Naive thymus-derived CD8-positive, alpha-beta T cell (primary cell): ENCODE measurements at regions of chr3 and their contacts with region 1.

Region 1: DNA sequence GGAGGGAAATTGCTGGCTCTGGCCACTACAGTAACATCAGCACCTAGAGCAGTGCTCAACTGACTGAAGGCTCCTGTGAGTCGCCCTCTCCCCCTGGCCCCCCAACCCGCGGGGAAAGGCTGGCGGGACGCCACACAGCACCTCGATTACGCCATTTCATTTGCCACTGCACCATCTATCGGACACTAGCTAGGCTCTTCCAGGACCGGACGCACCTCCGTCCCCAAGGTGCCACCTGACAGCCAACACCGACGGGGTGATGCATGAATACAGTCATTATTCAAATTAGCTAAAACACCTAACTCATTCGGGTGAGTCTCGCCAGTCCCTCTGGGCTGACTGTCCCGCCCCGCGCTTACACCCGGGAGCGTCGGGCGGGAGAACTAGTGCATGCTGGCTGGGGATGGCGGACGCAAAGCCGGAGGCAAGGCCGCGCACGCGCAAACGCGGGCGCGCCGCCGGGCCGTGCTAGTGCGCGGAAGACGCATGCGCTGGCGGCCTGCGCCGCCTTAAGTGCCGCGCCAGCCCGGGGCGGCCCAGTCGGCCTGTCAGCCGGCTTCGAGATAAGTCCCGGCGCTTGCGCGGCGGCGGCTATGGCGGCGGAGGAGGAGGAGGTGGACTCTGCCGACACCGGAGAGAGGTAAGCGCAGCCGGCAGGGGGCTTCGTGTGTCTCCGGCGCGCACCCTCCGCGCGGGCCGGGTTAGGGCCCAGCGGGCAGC is at the start of gene ABHD5:
- DNase-seq: peak; percentile 94 to 98 (median 96)
- ATAC-seq: peak; percentile 94 to 95
- H3K4me3 Mint-ChIP-seq: peak within 1 kb of the TSS; percentile 89 to 98 (median 95)
- H3K27ac Mint-ChIP-seq: peak within 1 kb of the TSS; percentile 88 to 96 (median 94)
- H3K4me1 Mint-ChIP-seq: peaks cover 18 to 38% (median 25%) of the 10 kb centered on the region in 4 donors
- H3K27me3 Mint-ChIP-seq: no peaks in the 10 kb centered on the region
- polyA plus RNA-seq, gene ABHD5: 1.7 to 4.0 (median 3.6) TPM

Region 2: DNA sequence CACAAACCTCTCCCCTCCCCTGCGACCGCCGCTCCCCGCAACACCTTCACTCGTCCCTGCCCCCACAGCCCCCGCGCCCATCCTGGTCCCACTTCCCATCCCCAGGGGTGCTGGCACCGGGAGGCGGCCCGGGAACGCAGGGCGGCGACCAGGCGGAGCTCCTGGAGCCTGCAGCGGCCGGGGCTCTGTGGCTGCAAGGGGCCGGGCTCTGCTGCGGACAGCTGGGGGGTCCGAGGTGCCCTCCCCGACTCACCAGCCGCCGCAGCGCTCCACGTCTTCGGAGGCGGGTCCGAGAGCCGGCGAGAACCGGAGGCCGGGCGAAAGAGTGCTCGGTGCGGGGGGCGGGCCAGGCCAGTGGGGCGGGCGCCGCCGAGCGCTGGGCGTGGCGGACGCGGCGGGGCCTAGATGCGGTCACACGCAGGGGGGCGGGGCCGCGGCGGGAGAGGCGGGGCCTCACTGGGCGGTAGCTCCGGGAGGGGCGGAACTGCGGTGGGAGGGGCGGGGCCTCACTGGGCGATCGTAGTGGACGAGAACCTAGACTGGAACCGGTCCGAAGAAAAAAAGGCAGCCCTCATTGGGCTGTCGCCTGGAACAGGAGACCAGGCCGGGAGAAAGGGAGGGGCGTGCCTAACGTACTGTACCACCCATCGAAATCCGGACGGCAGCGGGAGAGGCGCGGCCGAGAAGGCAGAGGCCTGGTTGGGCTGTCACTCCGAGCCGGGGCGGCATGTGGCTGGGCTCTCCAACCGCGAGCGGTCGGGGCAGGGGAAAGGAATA is 68.7 kb before region 1 on chr3 and contains the start of gene ANO10:
- POLR2A ChIA-PET with region 1: interaction called, 14 read pairs
- DNase-seq: peak; percentile 84 to 97 (median 93)
- ATAC-seq: peak; percentile 87 to 93
- H3K4me3 Mint-ChIP-seq: peak within 1 kb of the TSS; percentile 86 to 94 (median 90)
- H3K27ac Mint-ChIP-seq: peak within 1 kb of the TSS; percentile 53 to 94 (median 87)
- H3K4me1 Mint-ChIP-seq: peaks cover 10 to 22% (median 17%) of the 10 kb centered on the region in 4 donors
- H3K27me3 Mint-ChIP-seq: no peaks in the 10 kb centered on the region
- polyA plus RNA-seq, gene ANO10: 6.9 to 10.4 (median 7.8) TPM

Region 3: DNA sequence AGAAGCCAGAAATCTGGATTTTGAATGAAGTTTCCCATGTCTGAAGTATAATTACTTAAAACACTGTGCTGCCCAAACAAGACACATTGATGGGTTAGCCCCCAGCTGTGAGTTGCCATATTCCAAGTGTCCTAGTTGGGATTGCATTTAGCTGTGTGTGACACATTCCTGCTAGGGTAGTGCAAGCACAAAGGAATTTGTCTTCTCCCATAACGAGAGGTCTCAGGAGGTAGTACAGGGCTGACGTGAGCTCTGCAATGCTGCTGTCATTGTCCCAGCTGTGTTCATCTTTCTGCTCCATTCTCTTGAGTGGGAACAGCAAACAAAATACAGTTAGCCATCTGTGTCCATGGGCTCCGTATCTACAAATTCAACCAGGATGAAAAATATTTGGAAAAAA is 63.8 kb after region 1 on chr3:
- POLR2A ChIA-PET with region 1: interaction called, 16 read pairs
- DNase-seq: no peak
- ATAC-seq: no peak
- H3K4me3 Mint-ChIP-seq: peak overlapping the region in 1 of 10 donors; percentile 13
- H3K27ac Mint-ChIP-seq: peak overlapping the region in 6 of 10 donors; percentile 21 to 98 (median 92)
- H3K4me1 Mint-ChIP-seq: peaks cover 29 to 57% (median 50%) of the 10 kb centered on the region in 4 donors
- H3K27me3 Mint-ChIP-seq: no peaks in the 10 kb centered on the region